Activated CD4-positive, alpha-beta T cell treated with anti-CD3 and anti-CD28 coated beads for 36 hours (primary cell): ENCODE measurements at regions of chr6 and their contacts with region 1.

Region 1: GRCh38 chr6:36927691-36928546 is 26.6 kb upstream of the PI16 start:
- DNase-seq: no peak
- ATAC-seq: no peak
- H3K4me3 Mint-ChIP-seq: no peak overlapping the region
- H3K27ac Mint-ChIP-seq: no peak overlapping the region
- H3K4me1 Mint-ChIP-seq: peaks cover 22% of the 10 kb centered on the region
- H3K27me3 Mint-ChIP-seq: no peaks in the 10 kb centered on the region

Region 2: DNA sequence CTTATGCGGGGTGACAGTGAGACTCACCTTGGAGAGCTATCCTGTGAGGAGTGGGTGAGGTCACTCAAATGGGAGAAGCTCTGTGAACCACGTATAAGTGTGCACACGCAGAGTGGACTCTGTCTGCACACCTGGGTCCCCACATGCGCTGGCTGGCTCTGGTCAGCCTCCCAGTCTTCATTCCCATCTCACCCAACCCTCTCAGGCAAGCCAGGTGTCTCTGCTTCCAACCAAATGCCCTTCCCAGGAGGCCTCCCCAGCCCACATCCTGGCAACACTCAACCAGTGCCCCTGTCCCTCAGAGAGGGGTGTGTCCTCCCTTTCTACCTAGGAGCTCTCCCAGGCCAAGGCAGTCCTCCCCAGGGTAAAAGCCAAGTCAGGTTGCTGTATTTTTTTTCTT is 18.6 kb after region 1 on chr6:
- CTCF ChIA-PET with region 1: no interaction called
- POLR2A ChIA-PET with region 1: no interaction called
- intact Hi-C with region 1: loop called in 1 of 2 experiments (anchors 1 kb)
- DNase-seq: no peak
- ATAC-seq: no peak
- H3K4me3 Mint-ChIP-seq: no peak overlapping the region
- H3K27ac Mint-ChIP-seq: no peak overlapping the region
- H3K4me1 Mint-ChIP-seq: peaks cover 34% of the 10 kb centered on the region
- H3K27me3 Mint-ChIP-seq: no peaks in the 10 kb centered on the region

Region 3: DNA sequence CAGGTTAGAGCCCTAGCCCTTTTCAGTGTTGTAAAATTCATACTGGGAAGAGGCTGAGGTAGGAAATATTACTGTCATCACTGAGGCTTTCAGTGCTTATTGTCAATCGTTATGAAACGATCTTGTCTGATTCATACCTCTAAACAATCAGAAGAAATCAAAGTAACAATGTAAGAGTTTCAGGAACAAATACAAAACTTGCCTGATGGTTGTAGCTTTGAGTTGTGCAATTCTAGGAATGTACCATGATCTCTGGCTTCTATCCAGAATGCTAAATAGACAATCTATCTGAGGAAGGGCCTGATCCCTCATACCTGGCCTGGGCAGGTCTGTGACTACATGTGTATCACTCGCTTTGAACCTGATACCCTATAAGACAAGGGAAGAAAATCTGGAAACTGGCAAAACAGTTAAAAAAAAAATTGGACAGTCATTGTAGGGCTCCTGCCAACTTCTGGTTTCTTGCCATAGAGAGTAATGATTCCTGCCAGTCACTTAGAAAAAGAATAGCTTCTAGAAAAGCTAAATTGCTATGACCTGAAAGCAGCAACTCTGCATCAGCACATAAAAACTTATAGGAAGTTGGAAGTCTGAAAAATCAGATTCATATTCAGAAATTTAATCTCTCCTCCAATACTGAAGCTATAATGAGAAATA is 1477.1 kb after region 1 on chr6:
- CTCF ChIA-PET with region 1: no interaction called
- POLR2A ChIA-PET with region 1: no interaction called
- intact Hi-C with region 1: no loop called
- DNase-seq: no peak
- ATAC-seq: peak; percentile 53
- H3K4me3 Mint-ChIP-seq: no peak overlapping the region
- H3K27ac Mint-ChIP-seq: no peak overlapping the region
- H3K4me1 Mint-ChIP-seq: peaks cover 14% of the 10 kb centered on the region
- H3K27me3 Mint-ChIP-seq: no peaks in the 10 kb centered on the region